H1 (cell line): ENCODE measurements at regions of chr3 and their contacts with region 1.

Region 1: GRCh38 chr3:184777336-184778004 is 34.5 kb upstream of the VPS8 start:
- DNase-seq: peak; percentile 57 to 86
- H3K4me3 ChIP-seq: no peak overlapping the region
- H3K27ac ChIP-seq: no peak overlapping the region
- H3K4me1 ChIP-seq: peaks cover 0 to 7% (median 3%) of the 10 kb centered on the region in 4 experiments; a peak in 3 of 7 replicates
- H3K27me3 ChIP-seq: no peaks in the 10 kb centered on the region; a peak in 1 of 7 replicates
- CTCF ChIP-seq: peak; percentile 18 to 87 (median 77)
- EP300 ChIP-seq: no peak
- POLR2A ChIP-seq: no peak
- RAD21 ChIP-seq: peak; percentile 96 to 97

Region 2: GRCh38 chr3:184543843-184544512 is 233.5 kb before region 1 on chr3:
- CTCF ChIA-PET with region 1: interaction called, 47 read pairs
- POLR2A ChIA-PET with region 1: no interaction called
- DNase-seq: peak in 1 of 2 experiments; percentile 94
- H3K4me3 ChIP-seq: no peak overlapping the region
- H3K27ac ChIP-seq: no peak overlapping the region
- H3K4me1 ChIP-seq: peaks cover 0 to 5% (median under 1%) of the 10 kb centered on the region in 4 experiments; a peak in 3 of 7 replicates
- H3K27me3 ChIP-seq: peaks cover 0 to 3% (median 0%) of the 10 kb centered on the region in 4 experiments; a peak in 1 of 7 replicates
- CTCF ChIP-seq: peak; percentile 56 to 94 (median 81)
- EP300 ChIP-seq: no peak
- POLR2A ChIP-seq: no peak
- RAD21 ChIP-seq: peak; percentile 94 to 96

Region 3: GRCh38 chr3:184583578-184584425 is 193.7 kb before region 1 on chr3:
- CTCF ChIA-PET with region 1: interaction called, 19 read pairs
- POLR2A ChIA-PET with region 1: interaction called, 3 read pairs
- DNase-seq: peak in 1 of 2 experiments; percentile 68
- H3K4me3 ChIP-seq: peak overlapping the region; percentile 51 to 71 (median 58)
- H3K27ac ChIP-seq: no peak overlapping the region
- H3K4me1 ChIP-seq: peaks cover 0 to 28% (median 20%) of the 10 kb centered on the region in 4 experiments; a peak in 6 of 7 replicates
- H3K27me3 ChIP-seq: peaks cover 8 to 63% (median 50%) of the 10 kb centered on the region in 4 experiments
- CTCF ChIP-seq: peak in 2 of 3 experiments; percentile 18 to 51; a peak in 2 of 4 replicates
- EP300 ChIP-seq: no peak
- POLR2A ChIP-seq: no peak
- RAD21 ChIP-seq: peak in 1 of 2 experiments; percentile 37; a peak in 1 of 4 replicates

Region 4: GRCh38 chr3:184604039-184604601 is 173.3 kb before region 1 on chr3:
- CTCF ChIA-PET with region 1: interaction called, 13 read pairs
- POLR2A ChIA-PET with region 1: no interaction called
- DNase-seq: no peak
- H3K4me3 ChIP-seq: peak overlapping the region; percentile 24 to 67 (median 46)
- H3K27ac ChIP-seq: no peak overlapping the region
- H3K4me1 ChIP-seq: peaks cover 6 to 23% (median 15%) of the 10 kb centered on the region in 4 experiments
- H3K27me3 ChIP-seq: peaks cover 41 to 83% (median 78%) of the 10 kb centered on the region in 4 experiments
- CTCF ChIP-seq: peak in 2 of 3 experiments; percentile 2 to 9; a peak in 2 of 4 replicates
- EP300 ChIP-seq: no peak
- POLR2A ChIP-seq: no peak
- RAD21 ChIP-seq: no peak; a peak in 1 of 4 replicates

Region 5: GRCh38 chr3:184727357-184728009 is 50.0 kb before region 1 on chr3:
- CTCF ChIA-PET with region 1: interaction called, 26 read pairs
- POLR2A ChIA-PET with region 1: no interaction called
- DNase-seq: peak; percentile 74 to 78
- H3K4me3 ChIP-seq: no peak overlapping the region
- H3K27ac ChIP-seq: no peak overlapping the region
- H3K4me1 ChIP-seq: no peaks in the 10 kb centered on the region; a peak in 1 of 7 replicates
- H3K27me3 ChIP-seq: peaks cover 0 to 3% (median 0%) of the 10 kb centered on the region in 4 experiments; a peak in 3 of 7 replicates
- CTCF ChIP-seq: peak; percentile 58 to 97 (median 95)
- EP300 ChIP-seq: no peak
- POLR2A ChIP-seq: no peak
- RAD21 ChIP-seq: peak; percentile 85 to 93

Region 6: DNA sequence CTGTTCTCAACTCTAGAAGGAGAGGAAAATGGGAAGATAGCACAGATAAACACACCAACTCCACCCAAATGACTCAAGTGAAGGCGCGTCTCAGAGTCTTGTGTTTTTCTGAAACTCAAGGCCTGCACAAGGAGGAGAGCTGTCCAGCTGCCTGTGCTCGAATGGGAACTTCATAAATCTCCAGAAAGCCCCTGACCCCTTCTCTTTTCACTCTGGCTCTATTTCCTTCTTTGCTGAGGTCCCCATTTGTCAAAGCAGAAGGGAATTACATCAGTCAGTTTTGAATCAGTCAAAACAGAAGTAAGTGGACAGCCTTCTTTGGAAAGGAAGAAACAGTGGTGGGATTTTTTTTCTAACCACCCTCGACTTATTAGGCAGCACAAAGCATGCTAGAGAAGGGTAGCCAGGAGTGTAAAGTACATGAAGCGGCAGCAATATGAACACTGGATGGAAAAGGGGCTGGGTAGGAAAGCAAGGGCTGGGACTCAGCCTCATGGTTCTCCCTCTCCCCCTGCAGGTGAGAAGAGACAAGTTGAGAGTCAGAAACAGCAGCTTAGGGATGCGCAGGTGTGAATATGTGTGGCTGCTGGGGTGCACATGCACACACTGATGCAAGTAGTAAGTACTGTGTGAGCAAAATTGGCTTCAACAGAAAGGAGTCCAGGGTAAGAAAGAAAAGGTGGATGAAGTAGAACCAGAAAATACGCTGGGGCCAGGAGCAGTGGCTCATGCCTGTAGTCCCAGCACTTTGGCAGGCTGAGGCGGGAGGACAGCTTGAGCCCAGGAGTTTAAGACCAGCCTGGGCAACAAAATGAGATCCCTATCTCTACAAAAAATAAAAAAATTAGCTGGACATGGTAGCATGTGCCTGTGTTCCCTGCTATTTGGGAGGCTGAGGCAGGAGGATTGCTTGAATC is 29.0 kb before region 1 on chr3:
- CTCF ChIA-PET with region 1: interaction called, 56 read pairs
- POLR2A ChIA-PET with region 1: no interaction called
- DNase-seq: no peak
- H3K4me3 ChIP-seq: no peak overlapping the region
- H3K27ac ChIP-seq: no peak overlapping the region
- H3K4me1 ChIP-seq: peaks cover 4 to 14% (median 5%) of the 10 kb centered on the region in 4 experiments; a peak in 5 of 7 replicates
- H3K27me3 ChIP-seq: peaks cover 0 to 4% (median 1%) of the 10 kb centered on the region in 4 experiments; a peak in 2 of 7 replicates
- CTCF ChIP-seq: peak; percentile 63 to 81 (median 69)
- EP300 ChIP-seq: no peak
- POLR2A ChIP-seq: no peak
- RAD21 ChIP-seq: peak; percentile 74 to 80

Region 7: DNA sequence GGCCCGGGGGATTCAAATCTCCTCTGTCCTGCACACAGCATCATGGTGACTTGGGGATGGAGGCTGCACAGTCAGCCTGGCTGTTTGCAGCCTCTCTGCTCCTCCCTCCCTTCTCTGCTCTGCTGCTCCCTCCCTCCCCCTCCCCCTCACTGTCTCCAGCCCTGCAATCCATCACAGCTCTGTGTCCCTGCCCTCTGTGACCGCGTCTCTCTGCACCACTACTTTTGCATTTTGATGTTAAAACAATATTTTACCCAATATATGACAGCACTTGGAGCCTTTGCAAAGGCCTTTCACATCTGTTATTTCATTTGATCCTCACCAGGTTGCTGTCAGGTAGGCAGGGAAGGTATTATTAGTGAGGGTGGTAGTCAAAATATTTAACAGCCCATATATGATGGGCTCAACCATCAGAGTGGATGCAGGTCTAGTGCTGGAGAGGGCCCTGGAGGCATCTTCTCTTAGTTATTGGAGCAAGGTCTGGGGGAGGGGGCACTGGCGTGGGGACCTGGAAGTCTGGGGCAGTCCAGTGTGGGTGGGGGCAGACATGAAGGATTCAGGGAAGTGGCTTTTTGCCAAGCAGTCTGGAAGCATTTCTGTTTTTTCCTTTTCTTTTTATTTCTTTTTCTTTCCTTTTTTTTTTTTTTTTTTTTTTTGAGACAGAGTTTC is 18.2 kb after region 1 on chr3:
- CTCF ChIA-PET with region 1: interaction called, 37 read pairs
- POLR2A ChIA-PET with region 1: no interaction called
- DNase-seq: no peak
- H3K4me3 ChIP-seq: no peak overlapping the region
- H3K27ac ChIP-seq: no peak overlapping the region
- H3K4me1 ChIP-seq: peaks cover 0 to 2% (median 0%) of the 10 kb centered on the region in 4 experiments; a peak in 4 of 7 replicates
- H3K27me3 ChIP-seq: no peaks in the 10 kb centered on the region
- CTCF ChIP-seq: no peak
- EP300 ChIP-seq: no peak
- POLR2A ChIP-seq: no peak
- RAD21 ChIP-seq: no peak